Activated CD4-positive, alpha-beta T cell treated with anti-CD3 and anti-CD28 coated beads, Interleukin-2, amount 10 ng/mL, durations not matched to agents 24 days and 14 days (primary cell): ENCODE measurements at regions of chr2 and their contacts with region 1.

Region 1: DNA sequence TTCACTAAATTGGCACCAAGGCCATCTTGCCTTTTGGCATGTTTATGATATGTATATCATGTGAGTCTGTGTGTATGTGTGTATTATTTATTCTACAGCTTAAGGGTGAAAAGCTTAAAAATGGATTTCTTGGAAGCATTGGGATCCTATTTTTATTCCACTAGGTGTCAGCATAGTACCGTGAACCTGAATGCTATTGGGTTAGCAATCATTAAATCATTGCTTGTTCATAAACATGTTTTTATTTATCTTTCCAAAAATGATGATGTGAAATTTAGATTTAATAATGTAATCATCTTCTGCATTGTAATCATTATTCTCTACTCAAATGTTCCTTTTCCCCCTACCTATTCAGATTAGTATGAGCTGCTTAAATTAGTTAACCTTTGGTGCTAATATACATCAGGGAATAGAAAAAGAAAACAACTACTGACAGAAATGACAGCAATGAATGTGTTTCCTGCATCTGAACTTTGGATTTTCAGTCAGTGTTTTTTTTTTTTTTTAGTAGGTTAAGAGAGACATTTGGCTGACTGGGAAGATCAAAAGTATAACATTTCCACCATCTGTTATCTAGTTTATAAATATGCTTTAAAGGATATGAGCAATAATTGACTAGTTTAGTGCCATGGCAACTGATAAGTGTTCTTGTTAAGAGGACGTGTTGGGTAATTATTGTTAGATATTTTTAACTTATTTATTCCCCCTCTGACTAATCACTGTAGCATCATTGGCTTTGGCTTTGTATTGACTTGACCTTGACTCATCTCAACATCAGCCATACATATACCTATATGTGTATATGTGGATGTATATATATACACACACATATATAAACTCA is 14.1 kb upstream of the ZSWIM2 start:
- DNase-seq: no peak
- H3K4me3 Mint-ChIP-seq: no peak overlapping the region
- H3K27ac Mint-ChIP-seq: no peak overlapping the region
- H3K4me1 Mint-ChIP-seq: no peaks in the 10 kb centered on the region
- H3K27me3 Mint-ChIP-seq: no peaks in the 10 kb centered on the region

Region 2: DNA sequence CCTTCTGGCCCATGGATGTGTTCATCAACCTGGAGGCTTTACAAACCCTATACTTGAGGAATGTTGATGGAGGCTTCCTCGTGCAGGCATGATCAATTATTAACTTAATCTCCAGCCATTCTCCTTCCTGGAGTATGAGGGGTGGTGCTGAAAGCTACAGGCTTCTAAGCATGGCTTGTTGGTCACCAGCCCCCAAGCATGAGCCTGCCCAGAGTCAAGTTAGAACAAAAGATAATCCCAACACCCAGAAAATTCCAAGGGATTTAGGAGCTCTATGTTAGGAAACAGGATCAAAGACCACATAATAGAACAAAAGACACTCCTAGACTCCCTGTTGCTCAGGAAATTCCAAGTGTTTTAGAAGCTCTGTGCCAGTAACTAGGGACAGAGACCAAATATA is 106.1 kb before region 1 on chr2:
- intact Hi-C with region 1: no loop called
- DNase-seq: no peak
- H3K4me3 Mint-ChIP-seq: no peak overlapping the region
- H3K27ac Mint-ChIP-seq: no peak overlapping the region
- H3K4me1 Mint-ChIP-seq: no peaks in the 10 kb centered on the region
- H3K27me3 Mint-ChIP-seq: no peaks in the 10 kb centered on the region

Region 3: GRCh38 chr2:187453078-187453641 is 590.1 kb after region 1 on chr2:
- intact Hi-C with region 1: loop called (anchors 5 kb)
- DNase-seq: no peak
- H3K4me3 Mint-ChIP-seq: no peak overlapping the region
- H3K27ac Mint-ChIP-seq: no peak overlapping the region
- H3K4me1 Mint-ChIP-seq: peaks cover 3% of the 10 kb centered on the region
- H3K27me3 Mint-ChIP-seq: peaks cover 3% of the 10 kb centered on the region